ENCODE measurements at regions of chr5 and their contacts with region 1.

Region 1: GRCh38 chr5:132820162-132820754 is 7.2 kb downstream of the SOWAHA start:
- DNase-seq: peak; percentile 95
- ATAC-seq: peak; percentile 92
- H3K4me3 Mint-ChIP-seq: peak overlapping the region; percentile 59
- H3K27ac Mint-ChIP-seq: no peak overlapping the region
- H3K4me1 Mint-ChIP-seq: peaks cover 33% of the 10 kb centered on the region
- H3K27me3 Mint-ChIP-seq: peaks cover 18% of the 10 kb centered on the region

Region 2: DNA sequence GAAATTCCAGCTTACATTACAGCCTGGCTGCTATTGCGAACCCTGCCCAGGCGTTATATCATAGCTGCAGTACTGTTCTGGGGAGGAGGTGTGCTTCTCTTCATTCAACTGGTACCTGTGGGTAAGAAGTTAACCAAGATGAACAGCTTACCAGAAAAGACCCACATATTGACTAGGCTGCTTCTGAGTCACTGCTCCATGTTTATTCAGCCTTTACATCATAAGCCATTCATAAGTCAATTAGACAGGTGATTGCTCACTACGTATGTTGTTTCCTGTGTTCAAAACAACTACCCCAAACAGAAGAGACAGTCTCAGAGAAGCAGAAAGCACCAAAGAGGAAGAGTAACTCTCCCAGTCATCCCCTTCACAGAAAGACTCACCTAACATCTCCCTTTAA is 485.4 kb before region 1 on chr5:
- CTCF ChIA-PET with region 1: no interaction called
- POLR2A ChIA-PET with region 1: no interaction called
- DNase-seq: no peak
- ATAC-seq: peak; percentile 39
- H3K4me3 Mint-ChIP-seq: no peak overlapping the region
- H3K27ac Mint-ChIP-seq: no peak overlapping the region
- H3K4me1 Mint-ChIP-seq: no peaks in the 10 kb centered on the region
- H3K27me3 Mint-ChIP-seq: no peaks in the 10 kb centered on the region

Region 3: GRCh38 chr5:132506094-132506692 is 314.1 kb before region 1 on chr5:
- CTCF ChIA-PET with region 1: interaction called, 25 read pairs
- POLR2A ChIA-PET with region 1: no interaction called
- DNase-seq: peak; percentile 51
- ATAC-seq: peak; percentile 68
- H3K4me3 Mint-ChIP-seq: no peak overlapping the region
- H3K27ac Mint-ChIP-seq: no peak overlapping the region
- H3K4me1 Mint-ChIP-seq: peaks cover 14% of the 10 kb centered on the region
- H3K27me3 Mint-ChIP-seq: peaks cover 13% of the 10 kb centered on the region

Region 4: GRCh38 chr5:132612846-132613245 is 207.4 kb before region 1 on chr5:
- CTCF ChIA-PET with region 1: no interaction called
- POLR2A ChIA-PET with region 1: no interaction called
- DNase-seq: no peak
- ATAC-seq: no peak
- H3K4me3 Mint-ChIP-seq: no peak overlapping the region
- H3K27ac Mint-ChIP-seq: no peak overlapping the region
- H3K4me1 Mint-ChIP-seq: no peaks in the 10 kb centered on the region
- H3K27me3 Mint-ChIP-seq: no peaks in the 10 kb centered on the region

Region 5: GRCh38 chr5:132639706-132640130 is 180.5 kb before region 1 on chr5:
- CTCF ChIA-PET with region 1: interaction called, 11 read pairs
- POLR2A ChIA-PET with region 1: interaction called, 3 read pairs
- DNase-seq: peak; percentile 66
- ATAC-seq: peak; percentile 69
- H3K4me3 Mint-ChIP-seq: peak overlapping the region; percentile 26
- H3K27ac Mint-ChIP-seq: peak overlapping the region; percentile 91
- H3K4me1 Mint-ChIP-seq: peaks cover 86% of the 10 kb centered on the region
- H3K27me3 Mint-ChIP-seq: no peaks in the 10 kb centered on the region

Region 6: GRCh38 chr5:132725745-132726144 is 94.5 kb before region 1 on chr5:
- CTCF ChIA-PET with region 1: no interaction called
- POLR2A ChIA-PET with region 1: no interaction called
- DNase-seq: no peak
- ATAC-seq: no peak
- H3K4me3 Mint-ChIP-seq: no peak overlapping the region
- H3K27ac Mint-ChIP-seq: no peak overlapping the region
- H3K4me1 Mint-ChIP-seq: peaks cover 1% of the 10 kb centered on the region
- H3K27me3 Mint-ChIP-seq: no peaks in the 10 kb centered on the region

Region 7: DNA sequence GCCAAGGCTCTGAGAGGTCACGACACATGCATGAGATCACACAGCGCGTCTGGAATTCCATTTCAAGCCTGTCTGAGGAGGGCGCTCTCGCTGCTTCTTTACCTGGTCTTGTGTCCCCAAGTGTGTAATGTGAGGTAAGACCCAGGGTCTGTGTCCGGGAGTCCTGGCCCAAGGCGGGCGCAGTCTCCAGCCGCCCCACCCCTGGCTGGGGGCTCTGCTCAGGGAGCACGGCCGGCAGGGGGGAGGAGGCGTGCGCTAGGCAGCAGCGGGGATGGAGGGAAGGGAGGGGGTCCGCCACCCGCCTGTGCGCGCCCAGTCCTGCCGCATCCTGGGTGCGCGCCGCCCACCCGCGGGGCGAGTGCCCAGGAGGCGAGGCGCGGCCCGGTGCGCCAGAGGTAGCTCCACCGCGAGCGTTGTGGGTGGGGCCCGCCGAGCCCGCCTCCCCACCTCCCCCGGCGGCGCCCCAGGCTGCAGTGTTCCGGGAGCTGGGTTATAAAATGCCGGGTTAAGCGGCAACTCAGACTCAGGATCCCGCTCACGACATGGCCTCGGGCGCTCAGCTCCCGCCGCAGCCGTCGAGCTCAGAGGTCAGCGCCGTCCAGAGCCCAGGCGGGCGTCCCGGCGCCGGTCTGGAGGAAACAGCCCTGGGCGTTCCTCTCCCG is 73.2 kb before region 1 on chr5 and contains the start of gene CCNI2:
- CTCF ChIA-PET with region 1: interaction called, 19 read pairs
- POLR2A ChIA-PET with region 1: interaction called, 3 read pairs
- DNase-seq: peak; percentile 69
- ATAC-seq: peak; percentile 88
- H3K4me3 Mint-ChIP-seq: peak within 1 kb of the TSS; percentile 71
- H3K27ac Mint-ChIP-seq: peak within 1 kb of the TSS; percentile 73
- H3K4me1 Mint-ChIP-seq: peaks cover 32% of the 10 kb centered on the region
- H3K27me3 Mint-ChIP-seq: peaks cover 5% of the 10 kb centered on the region
- total RNA-seq, gene CCNI2: 8.3 to 9.5 TPM

Region 8: GRCh38 chr5:132802044-132802684 is 18.1 kb before region 1 on chr5:
- CTCF ChIA-PET with region 1: interaction called, 28 read pairs
- POLR2A ChIA-PET with region 1: no interaction called
- DNase-seq: no peak
- ATAC-seq: no peak
- H3K4me3 Mint-ChIP-seq: no peak overlapping the region
- H3K27ac Mint-ChIP-seq: no peak overlapping the region
- H3K4me1 Mint-ChIP-seq: no peaks in the 10 kb centered on the region
- H3K27me3 Mint-ChIP-seq: peaks cover 65% of the 10 kb centered on the region